Common myeloid progenitor, CD34-positive (primary cell): ENCODE measurements at regions of chr11 and their contacts with region 1.

Region 1: GRCh38 chr11:77113382-77114088 is 10.9 kb downstream of the OMP start:
- DNase-seq: peak; percentile 46 to 64 (median 56)
- H3K4me3 ChIP-seq: no peak overlapping the region
- H3K27ac ChIP-seq: no peak overlapping the region
- H3K4me1 ChIP-seq: no peaks in the 10 kb centered on the region
- H3K27me3 ChIP-seq: no peaks in the 10 kb centered on the region

Region 2: DNA sequence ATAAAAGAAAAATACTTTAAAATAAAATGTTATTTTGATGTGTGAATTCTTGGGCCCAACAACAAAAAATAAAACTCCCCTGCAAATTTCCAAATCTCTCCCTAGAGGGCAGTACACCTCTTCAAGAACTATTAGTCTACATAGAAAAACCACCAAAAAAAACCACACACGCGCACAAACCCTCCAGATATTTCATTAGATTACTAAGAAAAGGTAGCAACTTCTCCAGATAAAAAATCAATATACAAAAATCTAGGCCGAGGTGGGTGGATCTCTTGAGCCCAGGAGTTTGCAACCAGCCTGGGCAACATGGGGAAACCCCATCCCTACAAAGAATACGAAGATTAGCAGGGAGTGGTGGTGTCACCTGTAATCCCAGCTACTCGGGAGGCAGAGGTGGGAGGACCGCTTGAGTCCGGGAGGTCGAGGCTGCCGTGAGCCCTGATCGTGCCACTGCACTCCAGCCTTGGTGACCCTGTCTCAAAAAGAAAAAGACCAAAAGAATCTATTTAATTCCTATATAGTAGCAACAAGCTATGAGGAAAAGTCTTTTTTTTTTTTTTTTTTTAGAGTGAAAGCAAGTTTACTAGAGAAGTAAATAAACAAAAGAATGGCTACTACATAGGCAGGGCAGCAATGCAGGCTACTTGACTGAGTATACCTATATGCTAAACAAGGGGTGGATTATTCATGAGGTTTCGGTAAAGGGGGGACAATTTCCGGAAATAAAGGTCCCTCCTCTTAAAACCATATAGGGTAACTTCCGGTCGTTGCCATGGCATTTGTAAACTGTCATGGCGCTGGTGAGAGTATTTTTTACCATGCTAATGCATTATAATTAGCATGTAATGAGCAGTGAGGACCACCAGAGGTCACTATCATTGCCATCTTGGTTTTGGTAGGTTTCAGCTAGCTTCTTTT is 66.3 kb before region 1 on chr11:
- CTCF ChIA-PET with region 1: interaction called, 22 read pairs
- POLR2A ChIA-PET with region 1: no interaction called
- DNase-seq: peak; percentile 96 to 98 (median 98)
- H3K4me3 ChIP-seq: peak overlapping the region in 6 of 7 experiments; percentile 49 to 82 (median 64)
- H3K27ac ChIP-seq: no peak overlapping the region
- H3K4me1 ChIP-seq: peaks cover 0 to 13% (median 7%) of the 10 kb centered on the region in 4 experiments
- H3K27me3 ChIP-seq: peaks cover 0 to 14% (median 6%) of the 10 kb centered on the region in 5 experiments

Region 3: GRCh38 chr11:77101052-77101537 is 12.4 kb before region 1 on chr11:
- CTCF ChIA-PET with region 1: interaction called, 11 read pairs
- POLR2A ChIA-PET with region 1: no interaction called
- DNase-seq: peak; percentile 45 to 67 (median 64)
- H3K4me3 ChIP-seq: no peak overlapping the region
- H3K27ac ChIP-seq: no peak overlapping the region
- H3K4me1 ChIP-seq: no peaks in the 10 kb centered on the region
- H3K27me3 ChIP-seq: no peaks in the 10 kb centered on the region